Heart left ventricle (tissue), 16 donors: ENCODE measurements at regions of chr13 and their contacts with region 1.

Region 1: DNA sequence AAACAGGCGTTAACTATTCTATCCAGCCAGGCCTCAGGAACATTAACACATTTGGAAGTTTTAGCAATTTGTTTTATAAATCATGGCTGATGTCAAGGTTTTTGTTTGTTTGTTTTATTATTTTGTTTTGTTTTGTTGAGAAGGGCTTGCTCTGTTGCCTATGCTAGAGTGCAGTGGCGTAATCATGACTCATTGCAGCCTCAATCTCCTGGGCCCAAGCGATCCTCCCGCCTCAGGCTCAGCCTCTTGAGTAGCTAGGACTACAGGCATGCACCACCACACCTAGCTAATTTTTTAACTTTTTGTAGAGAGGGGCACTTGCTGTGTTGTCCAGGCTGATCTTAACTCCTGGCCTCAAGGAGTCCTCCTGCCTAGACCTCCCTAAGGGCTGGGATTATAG is 28.3 kb downstream of the NUP58 start:
- DNase-seq: no peak
- ATAC-seq: no peak
- H3K4me3 ChIP-seq: no peak overlapping the region
- H3K27ac ChIP-seq: no peak overlapping the region
- H3K4me1 ChIP-seq: peaks cover 0 to 6% (median 0%) of the 10 kb centered on the region in 12 donors
- H3K27me3 ChIP-seq: no peaks in the 10 kb centered on the region
- CTCF ChIP-seq: no peak
- POLR2A ChIP-seq: no peak

Region 2: DNA sequence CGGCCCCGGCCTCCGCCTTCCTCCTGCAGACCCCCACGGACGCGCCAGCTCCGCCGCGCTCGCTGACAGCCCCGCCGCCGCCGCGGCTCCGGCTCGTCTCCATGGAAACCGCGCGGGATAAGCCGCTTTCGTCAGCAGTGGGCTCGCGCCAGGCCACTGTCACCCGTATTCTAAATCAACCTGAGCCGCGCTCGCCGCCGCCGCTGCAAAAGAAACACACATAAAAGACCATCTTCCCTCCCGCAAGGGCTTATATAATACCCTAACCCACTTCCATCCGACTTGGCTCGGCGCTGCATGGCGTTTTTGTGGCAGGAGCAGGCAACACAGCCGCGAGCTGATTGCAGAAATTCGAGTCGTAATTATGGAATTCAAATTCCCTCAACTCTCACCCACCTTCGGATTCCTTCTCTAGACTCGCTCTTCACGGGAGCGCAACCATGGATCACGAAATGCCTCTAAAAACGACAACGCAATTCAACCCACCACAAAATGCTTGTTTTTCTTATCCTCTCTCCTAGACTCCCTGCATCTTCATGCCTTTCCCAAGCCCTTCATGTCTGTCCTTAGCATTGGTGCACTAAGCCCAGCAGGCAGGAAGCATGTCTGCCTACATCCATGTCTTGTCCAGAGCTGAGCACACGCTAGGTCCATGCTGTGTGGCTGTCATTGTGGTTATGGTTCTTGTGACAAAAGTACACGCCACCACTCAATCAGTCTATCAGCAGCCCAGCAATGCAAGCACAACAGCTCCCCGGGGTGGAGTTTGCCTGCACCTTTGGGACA is 158.0 kb before region 1 on chr13 and contains the start of gene AMER2:
- intact Hi-C with region 1: no loop called
- DNase-seq: no peak
- ATAC-seq: no peak
- H3K4me3 ChIP-seq: peak within 1 kb of the TSS; percentile 8 to 44 (median 33)
- H3K27ac ChIP-seq: no peak within 1 kb of the TSS
- H3K4me1 ChIP-seq: peaks cover 0 to 18% (median 5%) of the 10 kb centered on the region in 12 donors
- H3K27me3 ChIP-seq: peaks cover 27 to 80% (median 46%) of the 10 kb centered on the region in 9 donors
- CTCF ChIP-seq: no peak
- POLR2A ChIP-seq: no peak
- total RNA-seq, gene AMER2: not detected

Region 3: GRCh38 chr13:25253687-25254086 is 76.0 kb before region 1 on chr13:
- intact Hi-C with region 1: loop called in 2 of 10 experiments (anchors 5 to 10 kb)
- DNase-seq: no peak
- ATAC-seq: no peak
- H3K4me3 ChIP-seq: no peak overlapping the region
- H3K27ac ChIP-seq: no peak overlapping the region
- H3K4me1 ChIP-seq: peaks cover 0 to 4% (median 0%) of the 10 kb centered on the region in 12 donors
- H3K27me3 ChIP-seq: no peaks in the 10 kb centered on the region
- CTCF ChIP-seq: no peak
- POLR2A ChIP-seq: no peak

Region 4: GRCh38 chr13:25281193-25281934 is 48.3 kb before region 1 on chr13:
- intact Hi-C with region 1: no loop called
- DNase-seq: no peak
- ATAC-seq: peak in 3 of 4 donors; percentile 41 to 73 (median 52)
- H3K4me3 ChIP-seq: no peak overlapping the region
- H3K27ac ChIP-seq: peak overlapping the region in 2 of 12 donors; percentile 19 to 73
- H3K4me1 ChIP-seq: peaks cover 0 to 64% (median 11%) of the 10 kb centered on the region in 12 donors
- H3K27me3 ChIP-seq: no peaks in the 10 kb centered on the region
- CTCF ChIP-seq: no peak
- POLR2A ChIP-seq: no peak

Region 5: DNA sequence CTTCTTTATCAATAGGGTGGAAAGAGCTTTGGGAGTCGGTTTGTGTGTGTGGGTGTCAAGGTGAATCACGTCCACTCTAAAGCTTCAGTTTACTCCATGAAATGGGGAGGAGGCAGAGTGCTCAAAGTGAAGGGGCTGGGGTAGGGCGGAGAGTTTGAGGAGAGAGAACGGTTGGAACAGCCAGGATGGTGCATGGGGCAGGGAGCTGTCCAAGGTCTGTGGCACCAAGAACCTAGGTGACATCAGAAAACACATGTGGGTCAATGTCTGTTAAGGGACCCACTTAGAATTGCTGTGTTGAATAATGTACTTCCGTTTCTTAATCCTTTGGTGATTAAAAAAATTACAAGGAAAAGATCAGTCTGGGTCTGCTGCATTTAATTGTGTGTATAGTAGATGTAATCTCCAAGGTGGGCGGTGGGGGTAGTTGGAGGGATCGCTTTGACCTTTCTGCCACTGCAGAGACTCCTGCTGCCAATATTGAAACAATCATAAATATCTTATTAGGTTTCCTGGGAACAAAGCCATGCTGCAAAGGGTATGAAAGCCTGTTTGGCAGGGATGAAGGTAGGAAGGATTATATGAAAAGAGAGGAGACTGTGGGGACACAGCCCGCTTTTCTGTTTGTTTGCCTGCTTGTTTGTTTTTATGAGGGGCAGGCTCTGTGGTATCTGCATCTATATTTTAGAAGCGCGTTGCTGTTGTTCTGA is 164.4 kb after region 1 on chr13:
- intact Hi-C with region 1: no loop called
- DNase-seq: no peak
- ATAC-seq: no peak
- H3K4me3 ChIP-seq: no peak overlapping the region
- H3K27ac ChIP-seq: no peak overlapping the region
- H3K4me1 ChIP-seq: no peaks in the 10 kb centered on the region
- H3K27me3 ChIP-seq: peaks cover 0 to 26% (median 0%) of the 10 kb centered on the region in 9 donors
- CTCF ChIP-seq: no peak
- POLR2A ChIP-seq: no peak